GM10248 (cell line): ENCODE measurements at regions of chr1 and their contacts with region 1.

Region 1: GRCh38 chr1:156480411-156481192 is 20.0 kb downstream of the MEF2D start:
- DNase-seq: peak; percentile 87
- CTCF ChIP-seq: peak; percentile 86

Region 2: GRCh38 chr1:156465747-156466365 is 14.7 kb before region 1 on chr1:
- CTCF ChIA-PET with region 1: interaction called, 80 read pairs
- POLR2A ChIA-PET with region 1: no interaction called
- DNase-seq: no peak
- CTCF ChIP-seq: no peak

Region 3: GRCh38 chr1:156508163-156508887 is 27.7 kb after region 1 on chr1:
- CTCF ChIA-PET with region 1: interaction called, 373 read pairs
- POLR2A ChIA-PET with region 1: no interaction called
- DNase-seq: peak; percentile 70
- CTCF ChIP-seq: no peak

Region 4: GRCh38 chr1:156584813-156585212 is 104.2 kb after region 1 on chr1:
- CTCF ChIA-PET with region 1: interaction called, 11 read pairs
- POLR2A ChIA-PET with region 1: no interaction called
- DNase-seq: no peak
- CTCF ChIP-seq: peak; percentile 37

Region 5: GRCh38 chr1:156740679-156741612 is 260.3 kb after region 1 on chr1 and contains the start of gene MRPL24:
- CTCF ChIA-PET with region 1: no interaction called
- POLR2A ChIA-PET with region 1: no interaction called
- DNase-seq: peak; percentile 93
- CTCF ChIP-seq: no peak